Activated naive CD4-positive, alpha-beta T cell treated with anti-CD3 and anti-CD28 coated beads for 36 hours (primary cell): ENCODE measurements at regions of chr4 and their contacts with region 1.

Region 1: DNA sequence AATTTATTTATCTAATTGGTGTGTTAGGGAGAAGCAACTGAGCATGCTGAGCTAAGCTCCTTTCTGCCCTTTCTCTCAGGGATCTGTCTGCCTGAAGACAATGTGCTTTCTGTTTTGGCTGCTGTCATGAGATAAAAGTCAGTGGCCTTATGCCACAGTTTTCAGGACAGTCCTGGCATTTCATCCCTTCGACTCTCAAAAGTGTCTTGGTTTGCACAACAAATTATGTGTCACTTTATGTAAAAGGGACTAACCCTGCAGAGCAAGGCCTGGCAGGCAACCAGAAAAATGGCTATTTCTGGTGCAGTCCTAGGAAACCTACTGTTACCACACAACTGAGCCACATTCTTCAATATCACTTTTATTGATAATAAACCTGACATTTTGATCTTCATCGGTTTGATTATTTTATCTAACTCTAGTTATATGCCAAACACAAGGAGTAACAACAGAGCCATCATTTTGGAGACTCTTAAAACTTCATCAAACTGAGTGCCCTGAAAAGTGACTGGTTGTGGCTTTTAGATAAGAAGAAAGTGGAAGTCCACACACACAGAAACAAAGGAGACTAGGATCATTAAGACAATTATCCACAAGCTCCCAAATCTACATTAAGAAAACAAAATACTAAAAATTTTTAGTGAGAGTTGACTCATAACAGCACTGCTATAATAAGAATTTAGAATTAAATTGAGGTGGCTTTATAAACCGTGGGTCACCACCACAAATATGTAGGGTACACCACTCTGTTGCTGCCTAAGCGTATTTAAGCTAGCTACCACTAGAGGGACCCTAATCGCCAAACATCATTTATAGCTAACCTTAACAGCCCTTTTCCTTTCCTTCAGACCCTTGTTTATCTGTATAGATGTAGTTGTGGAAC is 95.9 kb upstream of the PTPN13 start:
- DNase-seq: no peak
- H3K4me3 Mint-ChIP-seq: no peak overlapping the region
- H3K27ac Mint-ChIP-seq: no peak overlapping the region
- H3K4me1 Mint-ChIP-seq: no peaks in the 10 kb centered on the region
- H3K27me3 Mint-ChIP-seq: peaks cover 6% of the 10 kb centered on the region

Region 2: DNA sequence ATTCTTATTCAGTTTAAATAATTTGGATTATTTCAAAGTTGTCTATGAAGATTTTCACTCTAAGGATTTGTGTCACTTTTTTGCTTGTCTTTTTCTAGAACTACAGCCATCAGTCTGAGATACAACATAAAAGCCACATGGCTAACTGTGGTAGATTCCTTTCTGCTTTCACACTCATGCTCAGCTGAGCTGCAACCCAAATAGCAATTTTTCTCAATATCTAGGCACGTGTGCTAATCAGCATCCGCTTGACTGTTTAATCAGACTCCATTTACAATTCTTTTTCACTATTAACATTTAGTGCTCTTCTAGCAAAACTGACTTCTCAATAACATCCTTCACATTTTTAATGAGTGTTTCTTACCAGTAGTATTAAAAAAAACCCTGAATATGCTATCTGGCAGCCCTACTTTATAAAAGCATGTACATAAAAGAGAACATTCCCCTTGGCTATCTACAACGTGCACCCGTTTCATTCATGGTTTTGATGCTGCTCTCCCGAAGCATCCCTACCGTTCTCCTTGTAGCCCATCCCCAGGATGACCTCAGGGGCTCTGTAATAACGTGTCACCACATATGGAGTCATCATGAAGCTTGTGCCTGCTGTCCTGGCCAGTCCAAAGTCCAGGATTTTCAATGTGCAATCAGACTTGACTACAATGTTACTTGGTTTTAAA is 397.5 kb before region 1 on chr4:
- CTCF ChIA-PET with region 1: no interaction called
- intact Hi-C with region 1: no loop called
- DNase-seq: no peak
- H3K4me3 Mint-ChIP-seq: no peak overlapping the region
- H3K27ac Mint-ChIP-seq: no peak overlapping the region
- H3K4me1 Mint-ChIP-seq: no peaks in the 10 kb centered on the region
- H3K27me3 Mint-ChIP-seq: no peaks in the 10 kb centered on the region

Region 3: DNA sequence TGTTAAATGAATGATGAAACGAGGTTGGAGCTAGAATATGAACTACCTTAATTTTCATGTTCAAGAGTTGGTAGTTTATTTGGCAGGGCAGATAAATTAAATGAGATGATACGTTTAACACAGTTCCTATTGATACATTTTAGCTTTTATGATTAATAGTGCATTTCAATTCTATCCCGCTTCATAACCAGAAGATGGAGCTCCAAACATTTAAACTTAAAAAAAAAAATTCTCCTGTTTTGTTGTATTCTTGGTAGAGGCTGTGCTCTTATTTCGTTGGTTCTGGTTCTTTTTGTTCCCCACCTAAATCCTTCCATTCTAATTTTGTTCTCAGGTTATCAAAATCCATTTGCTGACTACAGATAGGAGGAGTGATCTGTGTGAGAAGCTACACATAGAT is 24.1 kb after region 1 on chr4:
- CTCF ChIA-PET with region 1: interaction called, 10 read pairs
- intact Hi-C with region 1: no loop called
- DNase-seq: no peak
- H3K4me3 Mint-ChIP-seq: no peak overlapping the region
- H3K27ac Mint-ChIP-seq: no peak overlapping the region
- H3K4me1 Mint-ChIP-seq: no peaks in the 10 kb centered on the region
- H3K27me3 Mint-ChIP-seq: peaks cover 31% of the 10 kb centered on the region

Region 4: DNA sequence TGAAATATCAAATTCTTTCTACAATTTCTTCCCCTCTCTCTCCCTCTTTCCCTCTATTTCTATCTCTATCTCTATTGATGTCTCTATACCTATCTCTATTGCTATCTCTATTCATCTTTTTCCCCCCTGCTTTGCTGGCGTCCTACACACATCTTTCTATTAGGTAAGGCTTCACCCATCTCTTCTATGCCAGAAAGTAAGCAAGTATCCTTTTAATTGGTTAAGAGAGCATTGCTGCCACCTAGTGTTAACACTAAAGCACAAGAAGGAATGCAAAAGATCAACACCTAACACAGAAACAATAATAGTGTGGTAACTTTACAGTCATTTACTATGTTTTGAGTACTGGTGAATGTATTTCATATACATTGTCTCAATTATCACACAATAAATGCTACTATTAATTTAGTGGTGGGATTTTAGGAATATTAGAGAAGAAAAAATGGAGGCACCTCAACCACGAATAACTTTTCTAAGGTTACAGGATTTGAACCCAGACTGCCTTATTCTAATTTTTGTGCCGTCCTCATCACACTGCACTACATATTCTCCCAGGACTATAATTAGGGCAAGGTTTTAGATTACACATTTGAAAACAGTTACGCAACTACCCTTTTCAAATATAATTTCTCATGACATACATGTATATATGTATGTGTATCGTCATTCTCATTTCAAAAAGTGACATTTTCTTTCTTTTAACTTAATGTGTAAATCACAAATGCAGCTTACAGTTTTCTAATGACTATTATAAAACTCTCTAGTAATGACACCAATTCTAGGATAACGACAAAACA is 397.7 kb after region 1 on chr4:
- CTCF ChIA-PET with region 1: interaction called, 56 read pairs
- intact Hi-C with region 1: loop called (anchors 1 kb)
- DNase-seq: no peak
- H3K4me3 Mint-ChIP-seq: no peak overlapping the region
- H3K27ac Mint-ChIP-seq: no peak overlapping the region
- H3K4me1 Mint-ChIP-seq: peaks cover 5% of the 10 kb centered on the region
- H3K27me3 Mint-ChIP-seq: peaks cover 17% of the 10 kb centered on the region

Region 5: GRCh38 chr4:87235020-87235671 is 736.9 kb after region 1 on chr4:
- CTCF ChIA-PET with region 1: interaction called, 3 read pairs
- intact Hi-C with region 1: loop called (anchors 2 kb)
- DNase-seq: no peak
- H3K4me3 Mint-ChIP-seq: no peak overlapping the region
- H3K27ac Mint-ChIP-seq: no peak overlapping the region
- H3K4me1 Mint-ChIP-seq: no peaks in the 10 kb centered on the region
- H3K27me3 Mint-ChIP-seq: peaks cover 2% of the 10 kb centered on the region